ENCODE measurements at regions of chr6 and their contacts with region 1.

Region 1: DNA sequence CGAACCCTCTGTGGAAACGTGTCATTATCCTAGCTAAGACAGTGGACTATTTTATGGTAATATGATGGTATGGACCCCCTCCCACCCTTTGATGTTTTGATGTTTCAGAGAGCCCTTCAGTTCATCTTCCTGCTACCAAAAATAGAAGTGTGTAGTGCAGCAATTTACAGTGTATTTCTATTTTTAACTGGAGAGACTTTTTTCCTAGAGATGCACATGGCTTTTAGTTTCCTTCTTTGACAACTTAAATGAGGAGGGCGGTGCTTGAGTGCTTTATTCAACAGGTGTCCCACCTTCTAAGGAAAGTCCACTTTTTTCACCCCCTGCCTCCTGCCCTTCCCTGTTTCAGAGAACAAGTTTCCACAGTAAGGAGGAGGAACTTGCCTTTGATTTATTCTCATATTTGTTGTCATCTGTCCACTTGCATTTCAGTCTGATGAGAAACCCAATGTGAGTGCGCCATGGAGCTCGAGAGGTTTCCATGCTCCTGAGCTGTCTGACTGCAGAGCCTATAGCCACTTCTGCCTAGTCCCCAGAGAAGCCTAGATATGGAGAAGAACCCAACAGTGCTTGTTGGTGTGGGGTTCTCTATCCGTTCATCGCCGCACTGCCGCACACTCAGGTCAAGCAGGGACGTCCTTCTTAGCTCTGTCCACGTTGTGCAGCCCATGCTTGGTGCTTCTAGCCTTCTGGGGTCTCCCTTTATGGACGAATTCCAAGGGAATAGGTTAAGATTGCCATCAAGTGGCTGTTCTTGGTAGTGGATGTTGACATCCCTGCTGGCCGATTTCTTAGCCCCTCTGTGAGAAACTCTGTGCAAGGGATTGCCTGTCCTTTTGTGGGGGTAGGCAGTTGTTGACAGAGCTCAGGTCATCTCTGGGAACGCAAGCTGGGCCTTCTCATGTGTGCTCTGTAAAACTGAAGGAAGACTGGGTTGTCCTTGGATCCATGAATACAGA is 144.2 kb downstream of the JARID2 start:
- DNase-seq: peak in 1 of 10 donors; percentile 21

Region 2: DNA sequence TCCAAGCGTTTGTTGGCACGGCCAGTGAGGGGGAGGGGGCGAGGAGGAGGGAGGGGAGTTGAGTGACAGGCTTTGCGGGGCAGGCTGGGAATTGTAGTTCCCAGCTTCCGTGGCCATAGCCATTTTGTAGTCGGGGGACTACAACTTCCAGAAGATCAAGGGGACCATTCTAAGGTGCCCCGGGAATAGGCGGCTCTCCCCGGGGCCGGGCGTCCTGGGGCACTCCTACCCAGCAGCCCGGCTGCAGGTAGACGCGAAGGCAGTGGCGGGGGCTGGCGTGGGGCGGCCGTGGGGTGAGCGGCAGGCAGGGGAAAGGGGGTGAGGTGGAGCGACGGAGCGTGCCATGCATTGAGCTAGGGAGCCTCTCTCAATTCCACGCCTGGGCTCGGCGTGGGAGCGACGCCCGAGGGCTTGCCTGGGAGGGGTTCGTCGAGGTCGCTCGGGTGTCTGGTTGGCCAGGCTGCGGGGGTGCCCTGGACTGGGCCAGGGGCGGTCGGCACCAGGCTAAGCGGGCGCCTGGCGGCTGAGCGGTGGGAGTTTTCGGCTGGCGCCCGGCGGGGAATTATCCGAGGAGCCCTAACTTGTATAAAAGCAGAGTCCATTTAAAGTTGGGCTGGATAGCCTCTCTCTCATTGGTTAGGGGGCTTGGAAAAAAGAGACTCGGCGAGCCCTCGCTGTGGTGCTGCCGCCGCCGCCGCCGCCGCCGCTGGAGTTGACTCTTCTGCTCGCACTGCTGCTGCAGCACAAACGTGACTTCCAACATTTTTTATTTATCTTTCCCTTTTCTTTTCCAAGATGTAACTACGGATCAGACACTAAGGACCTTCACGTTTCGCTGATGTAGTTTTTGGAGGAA is 144.5 kb before region 1 on chr6 and contains the start of gene JARID2:
- intact Hi-C with region 1: loop called (anchors 2 kb)
- DNase-seq: peak; percentile 95 to 99 (median 97)

Measured in posterior cingulate gyrus (tissue), 11 donors.